Head of caudate nucleus (tissue), 42 donors: ENCODE measurements at regions of chr9 and their contacts with region 1.

Region 1: DNA sequence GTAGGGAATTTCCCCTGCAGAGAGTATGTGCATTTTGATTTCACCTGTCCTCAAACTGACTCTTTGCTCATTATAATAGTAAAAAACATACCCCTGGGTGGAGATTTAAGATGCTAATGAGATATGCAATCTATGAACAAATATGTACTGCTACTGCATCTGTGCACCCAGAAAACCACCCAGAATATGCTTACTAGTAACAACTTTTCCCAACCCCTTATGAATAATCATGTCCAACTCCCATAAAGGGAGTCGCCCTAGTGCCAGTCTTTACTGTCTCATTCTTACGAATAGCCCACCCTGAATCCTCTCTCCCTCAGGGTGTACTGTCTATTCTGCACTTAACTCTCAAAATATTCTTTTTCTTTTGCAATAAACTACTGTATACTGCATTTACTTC is 39.0 kb upstream of the ZFP37 start:
- DNase-seq: no peak

Region 2: DNA sequence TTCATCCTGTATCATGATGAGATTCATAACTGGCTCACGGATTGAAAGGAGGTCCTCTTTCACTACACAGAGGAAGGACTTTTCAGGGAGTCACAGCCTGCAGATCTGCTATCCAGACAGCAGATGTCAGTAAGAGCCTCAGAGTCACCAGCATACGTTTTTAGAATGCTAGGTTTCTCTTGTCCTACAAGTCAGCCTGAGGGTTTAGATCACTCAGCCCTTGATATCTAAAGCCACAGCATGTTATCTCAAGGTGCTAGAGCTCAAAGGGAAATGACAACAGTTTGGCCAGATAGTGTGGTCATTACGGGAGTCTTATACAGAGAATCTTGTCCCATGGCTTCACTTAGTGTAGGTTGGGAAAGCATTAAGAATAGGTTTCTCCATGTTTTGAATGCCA is 174.0 kb before region 1 on chr9:
- intact Hi-C with region 1: loop called (anchors 10 kb)
- DNase-seq: peak in 17 of 42 donors; percentile 7 to 57 (median 23)

Region 3: DNA sequence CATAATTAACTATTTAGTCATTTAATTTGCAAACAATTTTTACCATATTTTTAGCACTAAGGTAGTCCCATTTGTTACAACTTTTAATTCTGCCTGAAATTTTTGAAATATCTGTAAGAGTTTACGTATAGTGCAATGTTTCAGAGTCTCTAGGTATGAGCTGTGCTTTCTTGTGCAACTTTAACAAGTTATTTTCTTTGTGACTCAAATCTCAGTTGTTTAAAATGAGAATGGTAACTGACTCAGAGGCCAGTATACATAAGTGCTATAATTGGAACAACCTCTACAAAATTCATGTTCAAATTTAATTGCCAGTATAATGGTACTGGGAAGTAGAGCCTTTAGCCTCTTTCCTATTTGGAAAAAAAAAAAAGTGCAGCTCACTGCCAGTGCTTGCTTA is 69.4 kb before region 1 on chr9:
- intact Hi-C with region 1: no loop called
- DNase-seq: no peak

Region 4: DNA sequence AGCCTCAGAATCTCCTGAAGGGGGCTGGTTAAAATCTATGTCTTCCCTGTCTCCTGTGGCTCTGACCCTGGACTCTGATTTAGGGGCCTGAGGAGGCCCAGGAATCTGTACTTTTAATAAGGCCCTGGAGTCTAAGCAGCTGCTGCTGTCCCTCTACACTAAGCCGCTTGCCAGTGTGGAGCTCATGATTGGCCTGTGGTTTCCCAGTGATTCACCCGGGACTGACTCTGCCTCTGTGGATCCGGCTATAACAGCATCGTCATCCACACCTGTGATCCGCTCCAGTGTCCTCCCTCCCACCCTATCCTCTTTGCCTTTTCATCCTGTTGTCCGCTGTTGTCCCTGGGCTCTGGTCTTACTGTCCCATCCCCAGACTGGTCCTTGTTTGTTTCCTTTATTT is 58.9 kb after region 1 on chr9:
- intact Hi-C with region 1: no loop called
- DNase-seq: peak in 24 of 42 donors; percentile 25 to 80 (median 60)